Activated CD8-positive, alpha-beta T cell treated with anti-CD3 and anti-CD28 coated beads for 36 hours (primary cell): ENCODE measurements at regions of chr7 and their contacts with region 1.

Region 1: DNA sequence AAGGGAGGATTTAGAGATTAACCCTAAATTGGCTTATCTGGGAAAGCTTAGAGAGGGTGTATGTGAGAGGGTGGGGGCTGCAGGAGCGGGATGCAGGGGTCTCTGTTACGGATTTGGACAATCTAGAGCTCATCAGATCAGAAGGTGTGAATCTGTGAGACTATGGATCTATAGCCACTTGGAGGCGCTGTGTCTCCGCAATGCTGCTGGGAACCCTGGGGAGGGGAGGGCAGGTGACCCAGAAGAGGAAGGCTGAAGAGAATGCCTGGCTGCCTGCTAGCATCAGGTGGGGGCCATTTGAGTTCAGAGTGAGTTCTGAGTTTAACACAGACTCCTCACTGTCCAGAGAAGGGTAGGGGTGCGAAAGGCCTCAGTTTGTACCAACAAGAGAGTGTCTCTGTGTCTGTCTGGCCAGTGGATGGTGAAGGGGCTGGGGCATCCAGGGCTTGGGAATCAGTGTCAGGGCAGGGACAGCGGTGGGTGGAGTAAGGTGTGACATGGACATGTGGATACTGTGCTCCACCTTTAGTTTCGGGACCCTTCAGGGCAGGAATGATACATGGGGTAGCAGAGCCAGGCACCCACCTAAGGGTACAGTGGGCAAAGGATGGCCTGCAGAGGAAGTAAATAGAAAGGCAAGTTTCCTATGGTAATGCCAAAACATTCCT is 187.3 kb upstream of the PRSS58 start:
- DNase-seq: peak; percentile 59
- ATAC-seq: peak; percentile 75
- H3K4me3 Mint-ChIP-seq: no peak overlapping the region
- H3K27ac Mint-ChIP-seq: no peak overlapping the region
- H3K4me1 Mint-ChIP-seq: peaks cover 31% of the 10 kb centered on the region
- H3K27me3 Mint-ChIP-seq: no peaks in the 10 kb centered on the region
- CTCF ChIP-seq: peak; percentile 22

Region 2: GRCh38 chr7:142412551-142413193 is 32.5 kb before region 1 on chr7:
- CTCF ChIA-PET with region 1: interaction called, 12 read pairs
- POLR2A ChIA-PET with region 1: no interaction called
- intact Hi-C with region 1: no loop called
- DNase-seq: peak; percentile 58
- ATAC-seq: peak; percentile 84
- H3K4me3 Mint-ChIP-seq: no peak overlapping the region
- H3K27ac Mint-ChIP-seq: peak overlapping the region; percentile 12
- H3K4me1 Mint-ChIP-seq: peaks cover 6% of the 10 kb centered on the region
- H3K27me3 Mint-ChIP-seq: no peaks in the 10 kb centered on the region
- CTCF ChIP-seq: peak; percentile 76